ENCODE measurements at regions of chr11 and their contacts with region 1.

Region 1: GRCh38 chr11:18634140-18635032 is at the start of gene SPTY2D1:
- DNase-seq: peak; percentile 94 to 100 (median 97)
- ATAC-seq: peak; percentile 92
- H3K4me3 ChIP-seq: peak within 1 kb of the TSS; percentile 85 to 87
- H3K4me3 Mint-ChIP-seq: peak within 1 kb of the TSS; percentile 88
- H3K27ac ChIP-seq: peak within 1 kb of the TSS; percentile 92 to 100
- H3K27ac Mint-ChIP-seq: peak within 1 kb of the TSS; percentile 97
- H3K4me1 ChIP-seq: peaks cover 15% of the 10 kb centered on the region
- H3K4me1 Mint-ChIP-seq: peaks cover 34% of the 10 kb centered on the region
- H3K27me3 ChIP-seq: no peaks in the 10 kb centered on the region
- H3K27me3 Mint-ChIP-seq: no peaks in the 10 kb centered on the region
- CTCF ChIP-seq: no peak
- total RNA-seq, gene SPTY2D1: 74.9 to 76.9 TPM

Region 2: GRCh38 chr11:17077520-17078401 is 1556.6 kb before region 1 on chr11 and contains the start of gene RPS13:
- CTCF ChIA-PET with region 1: no interaction called
- POLR2A ChIA-PET with region 1: no interaction called
- intact Hi-C with region 1: loop called in 1 of 2 experiments (anchors 5 kb)
- DNase-seq: peak; percentile 88 to 99 (median 95)
- ATAC-seq: peak; percentile 94
- H3K4me3 ChIP-seq: peak within 1 kb of the TSS; percentile 86 to 95
- H3K4me3 Mint-ChIP-seq: peak within 1 kb of the TSS; percentile 99
- H3K27ac ChIP-seq: peak within 1 kb of the TSS; percentile 92 to 96
- H3K27ac Mint-ChIP-seq: peak within 1 kb of the TSS; percentile 99
- H3K4me1 ChIP-seq: peaks cover 25% of the 10 kb centered on the region
- H3K4me1 Mint-ChIP-seq: peaks cover 48% of the 10 kb centered on the region
- H3K27me3 ChIP-seq: no peaks in the 10 kb centered on the region
- H3K27me3 Mint-ChIP-seq: no peaks in the 10 kb centered on the region
- CTCF ChIP-seq: no peak
- total RNA-seq, gene RPS13: 2,112 to 2,169 TPM

Region 3: GRCh38 chr11:18395735-18396504 is 238.5 kb before region 1 on chr11:
- CTCF ChIA-PET with region 1: no interaction called
- POLR2A ChIA-PET with region 1: interaction called, 4 read pairs
- intact Hi-C with region 1: loop called (anchors 1 to 5 kb)
- DNase-seq: peak; percentile 89 to 98 (median 92)
- ATAC-seq: peak; percentile 54
- H3K4me3 ChIP-seq: peak overlapping the region; percentile 86 to 98
- H3K4me3 Mint-ChIP-seq: peak overlapping the region; percentile 97
- H3K27ac ChIP-seq: peak overlapping the region; percentile 90
- H3K27ac Mint-ChIP-seq: peak overlapping the region; percentile 96
- H3K4me1 ChIP-seq: peaks cover 22% of the 10 kb centered on the region
- H3K4me1 Mint-ChIP-seq: peaks cover 35% of the 10 kb centered on the region
- H3K27me3 ChIP-seq: no peaks in the 10 kb centered on the region
- H3K27me3 Mint-ChIP-seq: no peaks in the 10 kb centered on the region
- CTCF ChIP-seq: no peak

Region 4: DNA sequence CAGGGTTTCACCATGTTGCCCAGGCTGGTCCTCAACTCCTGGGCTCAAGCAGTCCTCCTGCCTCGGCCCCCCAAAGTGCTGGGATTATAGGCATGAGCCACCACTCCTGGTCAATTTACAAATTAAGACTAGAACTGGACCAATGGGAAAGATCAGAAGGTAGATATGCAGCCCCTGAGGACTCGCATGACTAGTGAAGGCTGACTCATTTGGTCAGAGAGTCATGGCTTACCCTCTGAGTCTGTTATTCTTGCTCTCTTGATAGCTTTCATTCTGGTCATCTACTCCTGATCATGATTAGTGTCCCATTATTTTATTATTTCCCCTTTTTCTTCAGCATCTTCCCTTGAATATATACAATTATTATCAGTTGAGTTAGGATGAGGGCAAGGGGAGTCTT is 181.5 kb before region 1 on chr11:
- CTCF ChIA-PET with region 1: no interaction called
- POLR2A ChIA-PET with region 1: no interaction called
- intact Hi-C with region 1: no loop called
- DNase-seq: no peak
- ATAC-seq: no peak
- H3K4me3 ChIP-seq: no peak overlapping the region
- H3K4me3 Mint-ChIP-seq: no peak overlapping the region
- H3K27ac ChIP-seq: no peak overlapping the region
- H3K27ac Mint-ChIP-seq: no peak overlapping the region
- H3K4me1 ChIP-seq: no peaks in the 10 kb centered on the region
- H3K4me1 Mint-ChIP-seq: no peaks in the 10 kb centered on the region
- H3K27me3 ChIP-seq: peaks cover 0 to 2% of the 10 kb centered on the region in 2 experiments
- H3K27me3 Mint-ChIP-seq: peaks cover 7% of the 10 kb centered on the region
- CTCF ChIP-seq: no peak

Region 5: GRCh38 chr11:18617688-18618341 is 16.6 kb before region 1 on chr11:
- CTCF ChIA-PET with region 1: interaction called, 3 read pairs
- POLR2A ChIA-PET with region 1: interaction called, 17 read pairs
- intact Hi-C with region 1: loop called in 1 of 2 experiments (anchors 1 kb)
- DNase-seq: peak in 7 of 9 experiments; percentile 24 to 72 (median 43)
- ATAC-seq: peak; percentile 71
- H3K4me3 ChIP-seq: peak overlapping the region in 1 of 2 experiments; percentile 9
- H3K4me3 Mint-ChIP-seq: peak overlapping the region; percentile 60
- H3K27ac ChIP-seq: peak overlapping the region in 1 of 2 experiments; percentile 61
- H3K27ac Mint-ChIP-seq: peak overlapping the region; percentile 1
- H3K4me1 ChIP-seq: peaks cover 35% of the 10 kb centered on the region
- H3K4me1 Mint-ChIP-seq: peaks cover 51% of the 10 kb centered on the region
- H3K27me3 ChIP-seq: no peaks in the 10 kb centered on the region
- H3K27me3 Mint-ChIP-seq: no peaks in the 10 kb centered on the region
- CTCF ChIP-seq: no peak

Region 6: DNA sequence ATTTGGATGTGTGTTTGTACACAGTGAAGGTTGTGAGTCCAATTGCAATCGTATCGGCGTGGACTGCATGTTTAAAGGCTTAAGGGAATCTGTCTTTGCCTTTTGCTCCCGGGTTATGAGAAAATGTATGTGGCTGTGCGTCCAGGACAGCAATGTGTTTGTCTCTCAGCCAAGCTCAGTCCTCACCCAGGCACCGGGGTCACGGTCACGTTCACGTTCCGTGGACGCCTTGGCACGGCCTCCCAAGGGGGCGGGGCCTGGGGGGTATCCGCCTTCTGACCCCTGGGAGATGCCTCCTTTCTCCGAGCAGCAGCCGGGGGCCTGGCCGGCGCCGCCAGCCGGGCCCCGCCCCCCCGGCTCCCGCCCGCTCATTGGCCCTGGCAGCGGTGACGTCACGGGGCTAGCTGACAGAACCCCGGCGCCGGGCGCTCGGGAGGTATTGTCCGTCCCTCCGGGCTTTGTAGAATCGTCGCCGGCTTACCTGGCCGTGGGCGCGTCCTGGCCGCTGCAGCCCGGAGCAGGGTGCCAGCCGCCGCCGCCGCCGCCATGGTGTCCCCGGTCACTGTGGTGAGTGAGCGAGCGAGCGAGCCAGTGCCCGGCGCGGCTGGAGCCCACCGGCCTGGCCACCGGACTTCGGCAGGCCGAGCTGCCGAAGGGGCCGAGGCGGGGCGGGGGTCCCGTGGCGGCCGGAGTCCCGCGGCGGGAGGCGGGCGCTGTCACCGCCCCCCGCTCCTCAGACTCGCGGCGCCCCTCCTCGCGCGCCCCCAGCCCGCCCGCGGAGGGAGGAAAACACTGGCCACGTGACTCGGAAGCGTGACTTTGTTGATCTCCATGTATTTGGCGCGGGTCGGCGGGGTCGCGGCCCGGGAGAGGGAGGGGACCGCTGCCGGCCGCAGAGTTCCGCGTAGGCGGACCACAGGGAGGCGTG is 64.2 kb after region 1 on chr11 and contains the start of gene TMEM86A:
- CTCF ChIA-PET with region 1: no interaction called
- POLR2A ChIA-PET with region 1: interaction called, 20 read pairs
- intact Hi-C with region 1: loop called (anchors 1 kb)
- DNase-seq: peak; percentile 80 to 95 (median 90)
- ATAC-seq: peak; percentile 94
- H3K4me3 ChIP-seq: peak within 1 kb of the TSS; percentile 58 to 67
- H3K4me3 Mint-ChIP-seq: peak within 1 kb of the TSS; percentile 84
- H3K27ac ChIP-seq: peak within 1 kb of the TSS; percentile 48 to 51
- H3K27ac Mint-ChIP-seq: peak within 1 kb of the TSS; percentile 86
- H3K4me1 ChIP-seq: peaks cover 10% of the 10 kb centered on the region
- H3K4me1 Mint-ChIP-seq: peaks cover 17% of the 10 kb centered on the region
- H3K27me3 ChIP-seq: no peaks in the 10 kb centered on the region
- H3K27me3 Mint-ChIP-seq: no peaks in the 10 kb centered on the region
- CTCF ChIP-seq: no peak
- total RNA-seq, gene TMEM86A: 5.2 to 6.1 TPM

Region 7: DNA sequence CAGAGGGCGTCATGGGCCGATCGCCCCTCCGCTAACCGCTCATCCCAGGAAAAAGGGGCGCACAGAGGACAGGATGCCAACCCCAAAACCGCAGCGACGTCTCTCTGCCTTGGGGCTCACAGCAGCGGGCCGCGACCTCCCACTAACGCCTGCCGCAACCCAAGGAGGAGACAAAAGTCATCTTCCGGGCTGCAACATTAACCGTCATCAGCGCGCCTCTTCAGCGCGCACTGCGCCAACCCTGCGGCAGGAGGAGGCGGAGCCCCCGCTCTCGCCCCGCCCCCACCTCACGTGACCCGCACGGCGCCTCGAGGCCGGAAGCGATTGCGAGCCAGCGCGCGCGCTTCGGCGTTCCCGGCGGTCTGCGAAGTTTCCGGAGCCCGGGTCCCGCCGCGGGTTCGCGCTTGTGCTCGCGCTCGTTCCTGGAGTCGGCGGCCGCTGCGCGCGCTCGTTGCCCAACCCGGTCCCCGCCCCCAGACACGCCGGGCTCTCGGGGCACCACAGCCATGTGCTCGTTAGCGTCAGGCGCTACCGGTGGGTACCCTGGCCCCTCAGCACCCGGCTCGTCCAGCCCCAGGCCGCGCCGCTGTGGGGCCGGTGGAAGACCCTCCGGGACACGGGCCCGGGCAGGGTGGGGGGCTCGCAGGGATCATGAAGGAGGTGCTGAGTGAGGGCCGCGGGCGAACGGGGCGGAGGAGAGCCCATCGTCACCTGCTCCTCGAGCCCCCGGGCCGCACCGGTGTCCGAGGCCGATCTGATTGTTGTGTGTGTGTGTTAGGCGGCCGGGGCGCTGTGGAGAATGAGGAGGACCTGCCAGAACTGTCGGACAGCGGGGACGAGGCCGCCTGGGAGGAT is 1753.1 kb after region 1 on chr11 and contains the start of gene PRMT3:
- CTCF ChIA-PET with region 1: no interaction called
- POLR2A ChIA-PET with region 1: no interaction called
- intact Hi-C with region 1: loop called (anchors 5 to 10 kb)
- DNase-seq: peak; percentile 96 to 99 (median 97)
- ATAC-seq: peak; percentile 86
- H3K4me3 ChIP-seq: peak within 1 kb of the TSS; percentile 85 to 86
- H3K4me3 Mint-ChIP-seq: peak within 1 kb of the TSS; percentile 96
- H3K27ac ChIP-seq: peak within 1 kb of the TSS; percentile 92 to 94
- H3K27ac Mint-ChIP-seq: peak within 1 kb of the TSS; percentile 99
- H3K4me1 ChIP-seq: peaks cover 17% of the 10 kb centered on the region
- H3K4me1 Mint-ChIP-seq: peaks cover 35% of the 10 kb centered on the region
- H3K27me3 ChIP-seq: no peaks in the 10 kb centered on the region
- H3K27me3 Mint-ChIP-seq: no peaks in the 10 kb centered on the region
- CTCF ChIP-seq: peak; percentile 86
- total RNA-seq, gene PRMT3: 10.2 to 10.6 TPM